ENCODE measurements at regions of chr16 and their contacts with region 1.

Region 1: DNA sequence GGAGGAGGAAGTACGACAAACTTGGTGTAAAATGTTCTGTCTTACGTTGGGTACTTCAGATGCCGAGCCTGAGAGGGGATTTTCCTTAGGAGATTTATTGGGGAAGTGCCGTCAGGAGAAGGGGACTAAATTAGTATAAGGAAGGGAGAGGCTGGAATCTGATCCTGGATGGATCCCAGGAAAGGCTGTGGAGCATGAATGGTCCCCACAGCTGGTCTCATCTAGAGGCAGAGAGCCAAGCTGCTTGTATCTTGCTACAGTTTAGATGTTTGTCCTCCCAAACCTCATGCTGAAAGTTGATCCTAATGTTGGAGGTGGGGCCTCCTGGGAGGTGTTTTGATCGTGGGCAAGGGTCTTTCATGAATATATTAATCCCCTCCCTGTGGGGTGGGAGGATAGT is 798.4 kb upstream of the EEF2KMT start:
- DNase-seq: no peak
- H3K4me3 Mint-ChIP-seq: no peak overlapping the region
- H3K27ac Mint-ChIP-seq: no peak overlapping the region
- H3K4me1 Mint-ChIP-seq: peaks cover 23% of the 10 kb centered on the region
- H3K27me3 Mint-ChIP-seq: no peaks in the 10 kb centered on the region
- CTCF ChIP-seq: no peak

Region 2: GRCh38 chr16:5882087-5882661 is 13.8 kb before region 1 on chr16:
- CTCF ChIA-PET with region 1: no interaction called
- intact Hi-C with region 1: no loop called
- DNase-seq: peak; percentile 11
- H3K4me3 Mint-ChIP-seq: no peak overlapping the region
- H3K27ac Mint-ChIP-seq: no peak overlapping the region
- H3K4me1 Mint-ChIP-seq: peaks cover 12% of the 10 kb centered on the region
- H3K27me3 Mint-ChIP-seq: no peaks in the 10 kb centered on the region
- CTCF ChIP-seq: no peak

Region 3: DNA sequence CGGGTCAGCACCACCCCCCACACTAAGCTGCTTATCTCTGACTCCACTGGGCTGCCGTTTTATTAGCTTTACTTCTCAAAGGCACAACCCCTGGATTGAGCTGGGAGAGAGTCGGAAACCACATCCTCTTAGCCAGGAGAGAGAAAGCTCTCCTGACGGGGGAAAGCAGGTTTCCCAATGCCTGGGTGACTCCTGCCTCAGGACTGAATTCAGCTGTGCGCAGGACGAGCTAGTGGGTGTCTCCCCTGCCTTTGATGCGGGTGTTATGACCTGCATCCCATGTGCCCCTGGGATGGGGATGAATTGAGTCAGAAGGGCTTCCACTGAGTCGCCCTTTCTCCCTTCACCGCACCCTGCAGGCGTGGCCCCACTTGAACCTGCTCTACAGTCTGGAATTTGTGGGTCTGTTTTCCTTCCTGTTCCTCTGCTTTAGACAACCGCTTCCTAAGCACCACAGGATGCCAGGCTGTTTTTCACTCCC is 20.8 kb after region 1 on chr16:
- CTCF ChIA-PET with region 1: no interaction called
- intact Hi-C with region 1: loop called (anchors 2 kb)
- DNase-seq: peak; percentile 21
- H3K4me3 Mint-ChIP-seq: no peak overlapping the region
- H3K27ac Mint-ChIP-seq: no peak overlapping the region
- H3K4me1 Mint-ChIP-seq: peaks cover 29% of the 10 kb centered on the region
- H3K27me3 Mint-ChIP-seq: no peaks in the 10 kb centered on the region
- CTCF ChIP-seq: no peak

Measured in Calu3 (cell line).